GM12878 (cell line): ENCODE measurements at regions of chr15 and their contacts with region 1.

Region 1: GRCh38 chr15:26974120-26974780 is 3.3 kb downstream of the GABRG3 start:
- DNase-seq: no peak
- ATAC-seq: no peak
- H3K4me3 ChIP-seq: no peak overlapping the region
- H3K27ac ChIP-seq: no peak overlapping the region
- H3K4me1 ChIP-seq: no peaks in the 10 kb centered on the region
- H3K27me3 ChIP-seq: no peaks in the 10 kb centered on the region
- CTCF ChIP-seq: no peak
- EP300 ChIP-seq: no peak
- POLR2A ChIP-seq: no peak
- RAD21 ChIP-seq: no peak

Region 2: DNA sequence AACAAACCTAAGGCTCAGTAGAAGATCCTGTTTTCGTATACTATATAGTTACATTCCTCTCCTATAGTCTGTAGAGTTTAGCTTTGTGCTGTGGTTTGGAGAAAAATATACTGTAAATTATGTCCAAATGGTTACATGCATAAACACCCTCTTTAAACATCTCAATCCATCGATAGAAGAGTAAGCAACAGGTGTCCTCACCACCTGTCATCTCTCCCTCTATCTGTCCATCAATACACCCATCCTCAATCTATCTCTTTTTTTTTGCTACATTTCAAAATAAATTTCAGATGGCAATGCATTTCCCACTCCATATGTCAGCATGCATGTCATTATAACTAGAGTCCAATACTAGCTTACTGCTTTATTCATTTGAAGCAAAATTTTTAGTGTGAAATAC is 24.2 kb before region 1 on chr15:
- CTCF ChIA-PET with region 1: no interaction called
- POLR2A ChIA-PET with region 1: no interaction called
- RAD21 ChIA-PET with region 1: no interaction called
- SMC1A ChIA-PET with region 1: no interaction called
- in situ Hi-C with region 1: no loop called
- intact Hi-C with region 1: no loop called
- DNase-seq: no peak
- ATAC-seq: no peak
- H3K4me3 ChIP-seq: no peak overlapping the region
- H3K27ac ChIP-seq: no peak overlapping the region
- H3K4me1 ChIP-seq: no peaks in the 10 kb centered on the region
- H3K27me3 ChIP-seq: no peaks in the 10 kb centered on the region
- CTCF ChIP-seq: no peak
- EP300 ChIP-seq: no peak
- POLR2A ChIP-seq: no peak
- RAD21 ChIP-seq: no peak

Region 3: DNA sequence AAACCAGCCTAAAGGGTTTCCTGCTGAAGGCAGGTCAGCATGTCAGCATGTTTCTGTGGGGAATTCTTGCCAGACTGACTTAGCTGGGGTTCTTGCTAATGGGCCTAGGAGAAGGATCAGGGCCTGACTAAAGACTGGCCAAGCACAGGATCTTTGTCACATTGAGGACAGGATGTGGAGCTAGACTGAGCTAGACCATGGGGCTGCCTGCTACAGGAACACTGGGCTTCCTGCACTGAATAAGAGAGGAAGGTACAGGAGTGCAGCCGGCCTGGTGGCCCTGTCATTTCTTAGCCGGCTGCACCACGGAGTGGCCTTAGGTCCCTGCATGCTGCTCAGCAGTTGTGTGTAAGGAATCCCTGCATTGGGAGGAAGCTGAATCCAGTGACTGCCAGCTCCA is 64.9 kb after region 1 on chr15:
- CTCF ChIA-PET with region 1: no interaction called
- POLR2A ChIA-PET with region 1: no interaction called
- RAD21 ChIA-PET with region 1: no interaction called
- SMC1A ChIA-PET with region 1: no interaction called
- in situ Hi-C with region 1: no loop called
- intact Hi-C with region 1: loop called (anchors 10 kb)
- DNase-seq: no peak
- ATAC-seq: no peak
- H3K4me3 ChIP-seq: no peak overlapping the region
- H3K27ac ChIP-seq: no peak overlapping the region
- H3K4me1 ChIP-seq: no peaks in the 10 kb centered on the region
- H3K27me3 ChIP-seq: no peaks in the 10 kb centered on the region
- CTCF ChIP-seq: no peak
- EP300 ChIP-seq: no peak
- POLR2A ChIP-seq: no peak
- RAD21 ChIP-seq: no peak